PC-3 (cell line): ENCODE measurements at regions of chr9 and their contacts with region 1.

Region 1: DNA sequence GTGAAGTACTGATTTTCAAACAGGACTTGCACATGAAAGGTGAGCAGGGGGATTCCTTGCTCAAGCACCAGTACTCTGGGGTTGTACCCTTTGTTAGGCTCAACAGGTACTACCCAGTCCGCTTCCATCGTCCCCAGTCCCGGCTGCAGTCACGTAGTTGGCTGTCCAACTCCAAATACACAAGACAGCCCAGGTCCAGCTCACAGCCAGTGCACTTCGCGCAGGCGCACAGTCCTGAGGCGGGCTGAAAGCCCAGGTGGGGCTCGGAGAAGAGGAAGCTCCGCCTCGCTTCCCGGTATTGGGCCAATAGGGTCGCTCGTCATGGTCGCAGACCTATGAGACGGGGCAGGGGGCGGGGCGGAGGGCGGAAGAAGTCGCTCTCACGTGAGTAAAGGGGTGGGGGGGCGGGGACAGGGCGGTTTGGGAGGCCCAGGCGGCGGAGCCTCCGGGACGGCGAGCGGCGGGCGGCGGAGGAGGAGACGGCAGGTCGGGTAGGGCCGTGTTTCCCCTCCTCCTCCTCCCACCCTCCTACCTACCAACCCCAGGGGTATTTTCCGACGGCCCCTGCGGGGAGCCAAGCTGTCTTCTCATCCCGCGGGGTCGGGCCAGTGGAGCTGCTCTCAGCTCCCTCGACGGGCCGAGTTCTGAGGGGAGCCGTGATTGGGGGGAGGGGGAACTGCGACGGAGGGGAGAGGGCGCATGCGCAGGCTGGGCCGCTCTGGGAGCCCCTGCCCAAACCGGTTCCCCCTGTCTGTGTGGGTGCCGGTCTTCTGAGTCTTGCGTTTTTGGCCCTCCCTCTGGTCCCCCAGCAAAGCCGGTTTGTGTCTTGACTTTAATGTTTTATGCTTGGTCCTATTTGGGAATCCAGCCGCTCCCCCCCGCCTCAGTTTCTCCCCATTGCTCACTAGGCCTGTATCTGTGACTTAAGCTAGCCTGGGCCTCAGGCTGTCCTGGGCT is at the start of gene RABGAP1:
- DNase-seq: peak; percentile 97
- ATAC-seq: peak; percentile 98
- H3K4me3 ChIP-seq: peak within 1 kb of the TSS; percentile 86
- H3K27ac ChIP-seq: peak within 1 kb of the TSS; percentile 80
- H3K4me1 ChIP-seq: no peaks in the 10 kb centered on the region
- H3K27me3 ChIP-seq: no peaks in the 10 kb centered on the region
- CTCF ChIP-seq: no peak
- total RNA-seq, gene RABGAP1: 12.7 and 16.5 TPM in 2 replicates

Region 2: DNA sequence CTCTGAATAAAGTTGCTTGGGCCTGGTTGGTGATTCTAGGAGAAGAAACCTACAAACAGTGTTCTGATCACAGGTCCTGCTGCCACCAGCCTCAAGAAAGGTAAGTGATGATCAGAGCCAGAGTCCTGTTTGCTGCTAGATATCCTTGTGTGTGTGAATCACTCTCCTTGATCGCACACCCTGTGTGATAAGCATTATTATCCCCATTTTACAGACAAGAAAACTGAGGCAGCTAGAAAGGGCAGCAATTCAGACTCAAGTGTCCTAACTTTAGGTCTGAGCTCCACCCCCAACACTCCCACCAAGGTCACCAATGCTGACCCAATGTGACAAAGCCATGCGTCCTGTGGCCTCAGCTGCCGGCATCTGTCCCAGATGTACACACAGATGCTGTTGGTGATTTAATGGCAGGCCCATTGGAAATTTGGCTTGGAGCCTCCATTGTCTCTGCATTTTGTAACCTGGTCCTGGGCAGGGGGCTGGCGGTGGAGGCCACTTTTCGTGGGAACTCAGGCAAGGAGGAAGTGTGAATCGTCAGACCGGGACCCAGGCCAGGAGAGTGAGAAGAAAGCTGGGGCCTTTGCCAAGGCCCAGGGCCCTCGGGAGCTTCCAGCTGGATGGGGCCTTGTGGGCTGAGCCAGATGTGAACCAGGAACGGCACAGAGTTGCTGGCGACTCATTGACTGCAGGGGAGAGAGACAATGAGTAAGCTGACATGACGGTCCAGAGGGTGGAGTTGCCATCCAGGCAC is 1411.5 kb before region 1 on chr9:
- CTCF ChIA-PET with region 1: no interaction called
- POLR2A ChIA-PET with region 1: no interaction called
- intact Hi-C with region 1: no loop called
- DNase-seq: peak; percentile 67
- ATAC-seq: peak; percentile 77
- H3K4me3 ChIP-seq: no peak overlapping the region
- H3K27ac ChIP-seq: 0 out of 2 replicates have a peak overlapping the region, but pooled peaks have one; percentile 10
- H3K4me1 ChIP-seq: no peaks in the 10 kb centered on the region
- H3K27me3 ChIP-seq: no peaks in the 10 kb centered on the region
- CTCF ChIP-seq: no peak

Region 3: DNA sequence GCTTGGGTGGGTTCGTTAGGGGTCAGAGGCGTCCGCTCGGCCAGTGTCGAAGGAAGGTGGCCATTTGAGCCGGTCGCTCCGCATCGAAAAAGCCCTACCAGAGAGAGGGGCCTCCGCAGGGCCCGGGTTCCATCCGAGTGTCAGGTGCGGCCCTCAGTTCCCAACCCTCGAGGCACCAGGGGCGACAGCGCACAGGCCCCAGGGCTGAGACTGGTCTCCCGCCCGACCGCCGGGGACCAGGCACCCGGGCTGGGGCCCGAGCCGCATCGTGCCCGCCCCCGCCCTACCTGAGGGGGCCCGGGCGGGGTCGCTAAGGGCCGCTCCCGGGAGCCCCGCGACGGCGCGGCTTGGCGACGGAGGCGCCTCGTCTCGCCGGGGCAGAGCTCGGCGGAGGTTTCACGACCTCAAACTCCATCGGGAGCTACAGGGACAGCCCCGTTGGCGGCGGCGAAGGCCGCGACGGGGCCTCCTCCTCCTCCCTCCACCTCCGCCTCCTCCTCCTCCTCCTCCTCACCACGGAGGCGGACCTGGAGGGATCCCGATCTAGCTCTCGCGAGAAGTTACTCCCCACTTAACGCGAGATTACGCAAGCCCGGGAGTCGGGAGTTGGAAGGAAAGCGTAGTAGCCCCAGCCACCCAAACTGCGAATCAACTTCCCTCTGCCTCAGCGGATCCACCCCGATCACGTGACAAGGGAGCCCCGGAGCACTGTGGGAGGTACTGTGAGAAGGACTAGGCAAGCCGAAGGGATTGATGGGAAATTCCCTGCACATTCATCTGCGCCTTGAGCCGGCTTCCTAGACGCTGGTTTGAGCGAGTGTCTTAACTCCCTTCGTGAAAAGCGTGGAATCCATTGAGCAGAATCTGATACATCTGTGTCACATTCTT is 35.8 kb before region 1 on chr9 and contains the start of gene RC3H2:
- CTCF ChIA-PET with region 1: interaction called, 3 read pairs
- POLR2A ChIA-PET with region 1: no interaction called
- intact Hi-C with region 1: loop called (anchors 2 kb)
- DNase-seq: peak; percentile 98
- ATAC-seq: peak; percentile 89
- H3K4me3 ChIP-seq: peak within 1 kb of the TSS; percentile 96
- H3K27ac ChIP-seq: peak within 1 kb of the TSS; percentile 64
- H3K4me1 ChIP-seq: peaks cover 10% of the 10 kb centered on the region; the same call in 1 of the 2 replicates
- H3K27me3 ChIP-seq: no peaks in the 10 kb centered on the region
- CTCF ChIP-seq: no peak
- total RNA-seq, gene RC3H2: 18.0 and 23.0 TPM in 2 replicates

Region 4: GRCh38 chr9:122912964-122913673 is 27.8 kb before region 1 on chr9 and contains the start of gene ZBTB6:
- CTCF ChIA-PET with region 1: interaction called, 12 read pairs
- POLR2A ChIA-PET with region 1: interaction called, 4 read pairs
- intact Hi-C with region 1: no loop called
- DNase-seq: peak; percentile 81
- ATAC-seq: peak; percentile 99
- H3K4me3 ChIP-seq: peak within 1 kb of the TSS; percentile 98
- H3K27ac ChIP-seq: peak within 1 kb of the TSS; percentile 80
- H3K4me1 ChIP-seq: peaks cover 10% of the 10 kb centered on the region; the same call in 1 of the 2 replicates
- H3K27me3 ChIP-seq: no peaks in the 10 kb centered on the region
- CTCF ChIP-seq: no peak
- total RNA-seq, gene ZBTB6: 4.4 and 4.7 TPM in 2 replicates